PC-9 (cell line): ENCODE measurements at regions of chr20 and their contacts with region 1.

Region 1: GRCh38 chr20:47950073-47950913 is 165.0 kb upstream of the SULF2 start:
- DNase-seq: peak; percentile 81 to 98
- H3K4me3 ChIP-seq: no peak overlapping the region
- H3K27ac ChIP-seq: peak overlapping the region; percentile 95
- H3K4me1 ChIP-seq: peaks cover 42% of the 10 kb centered on the region
- H3K27me3 ChIP-seq: no peaks in the 10 kb centered on the region
- CTCF ChIP-seq: 0 out of 2 replicates have a peak, but pooled peaks have one; percentile 35

Region 2: GRCh38 chr20:47767972-47768794 is 182.1 kb before region 1 on chr20:
- CTCF ChIA-PET with region 1: no interaction called
- POLR2A ChIA-PET with region 1: interaction called, 14 read pairs
- intact Hi-C with region 1: no loop called
- DNase-seq: no peak
- H3K4me3 ChIP-seq: no peak overlapping the region
- H3K27ac ChIP-seq: no peak overlapping the region
- H3K4me1 ChIP-seq: 0 out of 2 replicates have a peak, but pooled peaks cover 5% of the 10 kb centered on the region
- H3K27me3 ChIP-seq: no peaks in the 10 kb centered on the region
- CTCF ChIP-seq: no peak

Region 3: DNA sequence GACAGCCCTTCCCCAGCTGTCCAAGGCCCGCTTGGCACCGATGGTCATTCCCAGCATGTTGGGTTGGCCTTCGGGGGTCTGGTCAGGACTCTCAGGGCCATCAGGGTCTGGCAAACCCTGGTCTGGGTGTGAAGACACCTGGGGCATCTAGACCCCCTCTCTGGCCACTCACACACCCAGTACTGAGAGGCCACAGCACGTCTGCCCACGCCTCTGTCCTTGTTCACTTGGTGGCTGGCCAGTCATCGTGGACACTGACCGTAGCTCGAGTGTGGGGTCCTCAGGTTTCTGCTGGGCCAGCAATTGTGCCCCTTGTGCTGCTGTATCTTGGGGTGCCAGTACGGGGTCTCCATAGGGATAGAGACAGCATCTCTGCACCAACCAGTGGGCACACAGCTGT is 111.1 kb before region 1 on chr20:
- CTCF ChIA-PET with region 1: no interaction called
- POLR2A ChIA-PET with region 1: no interaction called
- intact Hi-C with region 1: no loop called
- DNase-seq: no peak
- H3K4me3 ChIP-seq: no peak overlapping the region
- H3K27ac ChIP-seq: no peak overlapping the region
- H3K4me1 ChIP-seq: peaks cover 13% of the 10 kb centered on the region
- H3K27me3 ChIP-seq: no peaks in the 10 kb centered on the region
- CTCF ChIP-seq: no peak

Region 4: DNA sequence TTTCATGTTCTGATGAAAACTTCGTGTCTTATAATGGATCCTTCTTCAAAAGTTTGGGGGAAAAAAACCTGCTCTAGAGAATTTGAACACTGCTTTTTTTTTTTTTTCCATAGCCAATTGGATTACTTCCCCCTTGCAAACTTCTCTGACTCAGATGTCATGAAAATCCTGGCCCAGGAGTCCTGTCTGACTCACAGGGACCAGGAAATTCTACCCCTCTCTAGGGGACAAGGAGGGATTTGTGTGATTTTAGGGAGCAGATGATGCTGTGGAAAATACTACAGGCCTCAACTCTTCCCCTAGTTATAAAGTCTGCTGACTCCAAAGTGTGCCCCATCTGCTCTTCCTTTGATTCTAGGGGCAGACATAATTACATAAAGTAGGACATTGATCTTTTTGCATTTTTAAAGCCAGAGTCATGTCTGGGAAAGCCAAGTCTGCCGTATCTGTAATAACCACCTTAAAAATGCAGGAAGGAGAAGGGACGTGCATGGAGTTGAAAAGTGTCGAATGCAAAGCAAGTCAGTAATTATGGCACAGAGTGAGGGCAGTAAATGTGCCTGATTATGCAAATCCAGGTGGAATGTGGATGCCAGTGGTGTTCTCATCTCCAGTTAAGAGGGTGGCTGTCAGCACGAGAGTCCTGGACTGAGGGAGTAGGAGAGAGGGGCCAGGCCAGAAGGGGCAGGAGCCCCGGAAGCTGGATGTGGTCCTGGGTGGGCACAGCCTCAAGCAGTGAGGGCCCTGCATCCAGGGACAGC is 20.8 kb before region 1 on chr20:
- CTCF ChIA-PET with region 1: interaction called, 4 read pairs
- POLR2A ChIA-PET with region 1: no interaction called
- intact Hi-C with region 1: loop called (anchors 2 kb)
- DNase-seq: peak; percentile 50 to 88
- H3K4me3 ChIP-seq: no peak overlapping the region
- H3K27ac ChIP-seq: peak overlapping the region; percentile 96
- H3K4me1 ChIP-seq: peaks cover 68% of the 10 kb centered on the region
- H3K27me3 ChIP-seq: no peaks in the 10 kb centered on the region
- CTCF ChIP-seq: no peak